Endothelial cell of umbilical vein (primary cell): ENCODE measurements at regions of chr7 and their contacts with region 1.

Region 1: GRCh38 chr7:121395961-121396757 is at the start of gene FAM3C:
- DNase-seq: peak; percentile 96
- H3K4me3 ChIP-seq: peak within 1 kb of the TSS; percentile 73 to 100 (median 99)
- H3K27ac ChIP-seq: peak within 1 kb of the TSS; percentile 87
- H3K4me1 ChIP-seq: peaks cover 16% of the 10 kb centered on the region
- H3K27me3 ChIP-seq: no peaks in the 10 kb centered on the region
- CTCF ChIP-seq: peak; percentile 75 to 96
- POLR2A ChIP-seq: peak; percentile 51
- total RNA-seq, gene FAM3C: 50.0 and 54.5 TPM in 2 replicates

Region 2: DNA sequence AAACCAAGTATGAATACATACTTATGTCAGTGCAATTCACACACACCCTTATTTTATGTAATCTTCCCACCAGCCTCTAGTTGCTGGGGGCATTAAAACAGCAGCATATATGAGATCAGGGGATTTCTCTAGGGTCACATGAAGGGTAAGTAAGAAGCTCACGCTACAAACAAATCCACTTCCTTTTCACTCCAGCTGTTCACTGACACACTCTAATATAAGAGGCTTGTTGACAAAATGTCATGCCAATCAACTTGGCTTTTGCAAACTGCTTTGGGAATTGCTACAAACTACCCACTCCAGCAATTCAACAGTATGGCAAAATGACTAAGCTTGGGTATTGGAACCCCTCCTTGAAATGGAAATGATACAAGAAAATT is 10.4 kb before region 1 on chr7:
- CTCF ChIA-PET with region 1: interaction called, 15 read pairs
- POLR2A ChIA-PET with region 1: interaction called, 9 read pairs
- dilution Hi-C with region 1: no loop called
- intact Hi-C with region 1: loop called (anchors 1 kb)
- DNase-seq: peak; percentile 71
- H3K4me3 ChIP-seq: no peak overlapping the region
- H3K27ac ChIP-seq: no peak overlapping the region
- H3K4me1 ChIP-seq: peaks cover 23% of the 10 kb centered on the region
- H3K27me3 ChIP-seq: no peaks in the 10 kb centered on the region
- CTCF ChIP-seq: no peak
- POLR2A ChIP-seq: no peak

Region 3: GRCh38 chr7:121420979-121421378 is 24.8 kb after region 1 on chr7:
- CTCF ChIA-PET with region 1: interaction called, 10 read pairs
- POLR2A ChIA-PET with region 1: no interaction called
- dilution Hi-C with region 1: no loop called
- intact Hi-C with region 1: no loop called
- DNase-seq: no peak
- H3K4me3 ChIP-seq: no peak overlapping the region
- H3K27ac ChIP-seq: no peak overlapping the region
- H3K4me1 ChIP-seq: no peaks in the 10 kb centered on the region
- H3K27me3 ChIP-seq: peaks cover 0 to 3% of the 10 kb centered on the region in 2 experiments
- CTCF ChIP-seq: no peak
- POLR2A ChIP-seq: no peak

Region 4: GRCh38 chr7:121504478-121504877 is 108.3 kb after region 1 on chr7:
- CTCF ChIA-PET with region 1: interaction called, 7 read pairs
- POLR2A ChIA-PET with region 1: interaction called, 3 read pairs
- dilution Hi-C with region 1: no loop called
- intact Hi-C with region 1: loop called (anchors 1 kb)
- DNase-seq: peak; percentile 83
- H3K4me3 ChIP-seq: peak overlapping the region in 1 of 3 experiments; percentile 8
- H3K27ac ChIP-seq: peak overlapping the region; percentile 86
- H3K4me1 ChIP-seq: peaks cover 9% of the 10 kb centered on the region
- H3K27me3 ChIP-seq: no peaks in the 10 kb centered on the region
- CTCF ChIP-seq: no peak
- POLR2A ChIP-seq: no peak